ENCODE measurements at regions of chr3 and their contacts with region 1.

Region 1: DNA sequence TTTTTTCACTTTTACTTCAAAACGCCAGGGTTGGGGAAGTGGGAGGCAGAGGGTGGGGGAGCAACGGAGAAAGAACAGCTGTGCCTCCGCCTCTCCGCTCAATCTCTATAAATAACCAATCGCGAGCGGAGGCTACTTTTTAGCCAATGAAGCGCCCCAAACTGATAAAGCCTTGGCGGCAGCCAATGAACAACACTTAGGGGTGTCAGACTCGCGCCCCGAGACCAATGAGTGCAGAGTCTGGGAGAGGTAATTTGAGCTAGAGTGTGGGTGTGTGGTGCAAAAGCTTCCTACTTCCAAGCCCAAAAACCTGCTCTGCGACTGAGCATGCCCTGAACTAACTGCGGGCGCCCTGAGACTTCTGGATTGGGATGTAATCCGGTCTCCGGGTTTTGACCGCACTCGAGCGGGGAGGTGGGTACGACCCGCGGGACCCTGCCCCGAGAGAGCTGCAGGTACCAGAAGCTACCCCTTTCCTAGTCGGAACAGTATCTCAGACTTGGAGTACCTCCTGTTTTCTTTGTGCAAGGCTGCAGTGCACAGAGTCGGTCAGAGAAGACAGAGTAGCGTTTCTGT is 800 bp upstream of the RAP2B start:
- DNase-seq: peak; percentile 95
- ATAC-seq: peak; percentile 81
- H3K4me3 Mint-ChIP-seq: peak overlapping the region; percentile 98
- H3K27ac Mint-ChIP-seq: peak overlapping the region; percentile 95
- H3K4me1 Mint-ChIP-seq: peaks cover 28% of the 10 kb centered on the region
- H3K27me3 Mint-ChIP-seq: no peaks in the 10 kb centered on the region
- CTCF ChIP-seq: no peak

Region 2: GRCh38 chr3:153043729-153044328 is 117.4 kb before region 1 on chr3:
- CTCF ChIA-PET with region 1: interaction called, 21 read pairs
- POLR2A ChIA-PET with region 1: no interaction called
- intact Hi-C with region 1: loop called (anchors 5 kb)
- DNase-seq: no peak
- ATAC-seq: no peak
- H3K4me3 Mint-ChIP-seq: no peak overlapping the region
- H3K27ac Mint-ChIP-seq: no peak overlapping the region
- H3K4me1 Mint-ChIP-seq: peaks cover 5% of the 10 kb centered on the region
- H3K27me3 Mint-ChIP-seq: peaks cover 2% of the 10 kb centered on the region
- CTCF ChIP-seq: no peak

Region 3: DNA sequence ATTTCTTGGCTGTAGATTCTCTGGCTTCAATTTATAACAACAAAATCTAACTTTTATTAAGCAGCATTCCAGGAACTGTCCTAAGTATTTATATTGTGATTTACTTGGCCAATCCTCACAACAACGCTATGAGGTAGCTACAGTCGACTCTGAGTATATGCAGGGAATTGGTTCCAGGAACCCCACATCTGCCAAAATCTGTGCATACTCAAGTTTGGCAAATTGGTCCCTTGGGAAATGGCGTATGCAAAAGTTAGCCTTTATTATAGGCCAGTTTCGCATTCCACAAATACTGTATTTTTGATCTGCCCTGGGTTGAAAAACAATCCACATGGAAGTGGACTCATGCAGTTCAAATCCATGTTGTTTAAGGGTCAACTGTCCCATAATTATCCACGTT is 54.7 kb after region 1 on chr3:
- CTCF ChIA-PET with region 1: no interaction called
- POLR2A ChIA-PET with region 1: interaction called, 7 read pairs
- intact Hi-C with region 1: loop called (anchors 5 kb)
- DNase-seq: no peak
- ATAC-seq: no peak
- H3K4me3 Mint-ChIP-seq: no peak overlapping the region
- H3K27ac Mint-ChIP-seq: no peak overlapping the region
- H3K4me1 Mint-ChIP-seq: peaks cover 26% of the 10 kb centered on the region
- H3K27me3 Mint-ChIP-seq: no peaks in the 10 kb centered on the region
- CTCF ChIP-seq: no peak

Region 4: DNA sequence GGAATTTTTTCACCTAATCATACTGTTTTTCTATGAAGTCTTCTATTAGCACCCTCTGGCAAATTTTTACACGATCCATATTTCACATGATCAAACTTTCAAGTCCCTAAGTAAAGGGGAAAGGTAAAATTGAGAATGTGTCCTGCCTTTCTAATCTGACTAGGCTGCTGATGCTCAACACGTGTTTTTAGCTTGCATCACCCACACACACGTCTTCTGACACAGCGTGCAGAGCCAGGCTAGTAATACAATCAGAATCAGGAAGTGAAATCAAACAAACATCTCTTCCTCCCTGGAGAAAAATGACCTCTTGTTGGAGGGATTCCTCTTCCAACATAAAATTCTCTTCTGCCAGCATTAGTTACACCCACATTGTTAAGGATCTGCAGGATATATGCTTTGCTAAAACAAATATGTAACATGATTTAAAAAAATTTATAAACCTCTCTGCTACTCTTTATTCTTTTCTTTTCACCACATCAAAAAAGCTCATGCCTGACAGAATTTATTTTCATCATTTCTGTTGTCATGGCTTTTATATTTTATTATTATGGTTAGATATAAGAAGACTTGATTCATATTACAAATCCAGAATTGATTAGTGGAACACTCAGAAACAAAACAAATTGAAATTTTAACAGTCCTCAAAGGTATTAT is 123.2 kb after region 1 on chr3:
- CTCF ChIA-PET with region 1: no interaction called
- POLR2A ChIA-PET with region 1: no interaction called
- intact Hi-C with region 1: loop called (anchors 10 kb)
- DNase-seq: peak; percentile 72
- ATAC-seq: peak; percentile 86
- H3K4me3 Mint-ChIP-seq: peak overlapping the region; percentile 9
- H3K27ac Mint-ChIP-seq: peak overlapping the region; percentile 95
- H3K4me1 Mint-ChIP-seq: peaks cover 39% of the 10 kb centered on the region
- H3K27me3 Mint-ChIP-seq: no peaks in the 10 kb centered on the region
- CTCF ChIP-seq: no peak

Region 5: GRCh38 chr3:153330901-153331300 is 169.7 kb after region 1 on chr3:
- CTCF ChIA-PET with region 1: no interaction called
- POLR2A ChIA-PET with region 1: no interaction called
- intact Hi-C with region 1: no loop called
- DNase-seq: no peak
- ATAC-seq: no peak
- H3K4me3 Mint-ChIP-seq: no peak overlapping the region
- H3K27ac Mint-ChIP-seq: no peak overlapping the region
- H3K4me1 Mint-ChIP-seq: peaks cover 3% of the 10 kb centered on the region
- H3K27me3 Mint-ChIP-seq: no peaks in the 10 kb centered on the region
- CTCF ChIP-seq: no peak

Region 6: GRCh38 chr3:153621953-153622352 is 460.7 kb after region 1 on chr3:
- CTCF ChIA-PET with region 1: interaction called, 3 read pairs
- POLR2A ChIA-PET with region 1: interaction called, 5 read pairs
- intact Hi-C with region 1: loop called (anchors 10 kb)
- DNase-seq: peak; percentile 35
- ATAC-seq: peak; percentile 70
- H3K4me3 Mint-ChIP-seq: peak overlapping the region; percentile 15
- H3K27ac Mint-ChIP-seq: peak overlapping the region; percentile 70
- H3K4me1 Mint-ChIP-seq: peaks cover 51% of the 10 kb centered on the region
- H3K27me3 Mint-ChIP-seq: no peaks in the 10 kb centered on the region
- CTCF ChIP-seq: no peak

Region 7: DNA sequence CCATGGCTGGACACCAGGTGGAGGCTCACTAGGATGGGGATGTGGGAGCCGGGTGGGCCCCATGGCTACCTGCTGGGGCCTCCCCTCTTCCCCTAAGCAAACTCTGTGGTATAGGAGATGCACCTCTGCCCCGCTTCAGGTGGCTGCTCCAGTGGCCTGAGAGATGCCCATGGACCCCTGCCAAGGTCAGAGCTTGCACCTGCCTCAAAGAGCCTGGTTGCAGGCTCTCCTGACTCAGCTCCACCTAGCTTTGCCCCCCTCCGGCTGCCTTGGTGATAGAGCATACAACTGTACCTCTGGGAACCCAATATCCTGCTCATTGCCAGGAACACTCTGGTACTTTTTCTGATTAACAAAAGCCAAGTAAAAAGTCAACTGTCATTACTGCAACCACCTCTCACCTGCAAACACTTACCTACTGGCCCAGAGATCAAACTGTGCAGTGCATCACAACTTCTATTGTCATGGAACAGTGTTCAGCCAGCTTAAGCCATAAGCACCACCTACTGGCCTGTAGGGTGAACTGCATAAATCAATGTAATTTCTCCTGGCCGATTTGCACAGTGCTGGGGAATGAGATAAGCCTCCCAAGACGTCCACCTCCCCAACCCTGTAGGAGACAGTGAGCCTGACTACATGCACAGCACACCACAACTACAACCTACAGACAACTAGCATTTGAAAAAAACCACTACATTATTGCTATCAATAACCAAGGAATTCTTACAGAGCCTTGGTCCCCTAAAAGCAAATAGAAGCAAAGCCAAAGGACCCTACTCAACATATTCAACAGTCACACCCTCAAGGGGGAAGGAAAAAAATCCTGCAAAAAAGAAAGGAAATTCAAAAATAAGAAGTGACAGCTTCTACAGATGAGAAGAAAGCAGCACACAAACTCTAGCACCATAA is 607.6 kb after region 1 on chr3:
- CTCF ChIA-PET with region 1: interaction called, 4 read pairs
- POLR2A ChIA-PET with region 1: no interaction called
- intact Hi-C with region 1: loop called (anchors 10 kb)
- DNase-seq: peak; percentile 56
- ATAC-seq: peak; percentile 95
- H3K4me3 Mint-ChIP-seq: no peak overlapping the region
- H3K27ac Mint-ChIP-seq: no peak overlapping the region
- H3K4me1 Mint-ChIP-seq: no peaks in the 10 kb centered on the region
- H3K27me3 Mint-ChIP-seq: peaks cover 20% of the 10 kb centered on the region
- CTCF ChIP-seq: peak; percentile 76